PC-3 (cell line): ENCODE measurements at regions of chr7 and their contacts with region 1.

Region 1: GRCh38 chr7:105759670-105760550 is 116.5 kb downstream of the ATXN7L1 start:
- DNase-seq: peak; percentile 85
- ATAC-seq: peak; percentile 80
- H3K4me3 ChIP-seq: no peak overlapping the region
- H3K27ac ChIP-seq: no peak overlapping the region
- H3K4me1 ChIP-seq: no peaks in the 10 kb centered on the region; the same call in 1 of the 2 replicates
- H3K27me3 ChIP-seq: no peaks in the 10 kb centered on the region
- CTCF ChIP-seq: peak; percentile 97

Region 2: DNA sequence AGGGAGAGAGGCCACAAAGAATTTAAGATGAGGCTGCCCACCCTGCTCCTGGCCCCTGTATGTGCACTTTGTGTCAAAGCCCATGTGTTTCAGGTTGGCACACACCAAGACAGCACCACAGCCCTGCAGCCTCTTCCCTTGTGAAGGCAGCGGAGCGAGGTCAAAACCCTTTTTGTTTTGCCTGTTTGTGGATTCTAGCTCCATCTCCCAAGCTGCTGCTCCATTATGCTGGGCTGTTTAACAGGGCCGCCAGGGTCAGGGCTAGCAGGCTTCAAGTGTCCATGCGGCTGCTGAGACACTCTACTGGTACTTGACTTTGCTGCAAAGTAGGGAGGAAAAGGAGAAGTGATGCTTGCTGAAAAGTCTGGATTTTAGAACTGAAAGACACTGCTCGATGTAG is 36.3 kb before region 1 on chr7:
- CTCF ChIA-PET with region 1: no interaction called
- POLR2A ChIA-PET with region 1: no interaction called
- intact Hi-C with region 1: no loop called
- DNase-seq: no peak
- ATAC-seq: no peak
- H3K4me3 ChIP-seq: no peak overlapping the region
- H3K27ac ChIP-seq: no peak overlapping the region
- H3K4me1 ChIP-seq: peaks cover 10% of the 10 kb centered on the region
- H3K27me3 ChIP-seq: no peaks in the 10 kb centered on the region
- CTCF ChIP-seq: no peak

Region 3: DNA sequence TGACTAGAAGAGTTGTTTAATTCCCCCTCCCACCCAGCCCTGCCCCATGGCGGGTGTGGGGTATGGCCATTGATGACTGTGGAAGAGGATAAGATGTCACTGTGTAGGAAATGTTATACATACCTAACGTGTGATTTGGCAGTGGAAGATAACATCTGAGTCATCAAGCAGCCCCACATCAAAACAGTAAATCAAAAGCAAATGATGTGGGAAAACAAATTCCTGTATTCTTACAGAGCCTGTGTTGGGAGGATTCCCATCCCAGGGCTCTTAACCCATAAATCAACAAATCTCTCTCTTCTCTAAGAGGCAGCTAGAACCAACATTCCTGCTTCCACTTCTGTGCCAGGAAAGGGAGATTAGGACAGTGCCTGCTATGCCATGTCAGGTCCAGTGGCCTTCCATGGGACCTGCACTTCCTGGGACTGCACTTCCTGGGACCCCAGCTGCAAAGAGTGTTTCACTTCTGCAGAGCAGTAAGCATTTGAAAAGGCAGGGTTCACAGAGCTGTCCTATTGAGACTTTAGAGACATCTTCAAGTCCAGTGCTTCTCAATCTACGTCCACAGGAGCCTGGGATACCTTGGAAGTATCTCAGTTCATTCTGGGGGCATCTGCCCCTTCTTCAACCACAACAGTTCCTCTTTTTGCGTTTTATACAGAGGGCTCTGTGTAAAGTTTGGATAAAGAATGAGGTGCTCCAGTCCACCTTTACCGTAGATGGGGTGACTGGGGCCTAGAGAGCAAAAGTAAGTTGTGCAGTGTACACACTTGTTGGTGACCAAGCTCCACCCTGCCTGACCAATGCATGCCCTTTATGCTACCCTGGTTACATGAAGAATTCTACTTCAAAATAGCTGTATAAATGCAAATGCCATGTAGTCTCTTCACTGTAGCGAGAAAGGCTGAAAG is 70.7 kb after region 1 on chr7:
- CTCF ChIA-PET with region 1: interaction called, 4 read pairs
- POLR2A ChIA-PET with region 1: no interaction called
- intact Hi-C with region 1: loop called (anchors 1 kb)
- DNase-seq: peak; percentile 99
- ATAC-seq: peak; percentile 82
- H3K4me3 ChIP-seq: no peak overlapping the region
- H3K27ac ChIP-seq: peak overlapping the region; percentile 82
- H3K4me1 ChIP-seq: peaks cover 57% of the 10 kb centered on the region
- H3K27me3 ChIP-seq: no peaks in the 10 kb centered on the region
- CTCF ChIP-seq: no peak

Region 4: DNA sequence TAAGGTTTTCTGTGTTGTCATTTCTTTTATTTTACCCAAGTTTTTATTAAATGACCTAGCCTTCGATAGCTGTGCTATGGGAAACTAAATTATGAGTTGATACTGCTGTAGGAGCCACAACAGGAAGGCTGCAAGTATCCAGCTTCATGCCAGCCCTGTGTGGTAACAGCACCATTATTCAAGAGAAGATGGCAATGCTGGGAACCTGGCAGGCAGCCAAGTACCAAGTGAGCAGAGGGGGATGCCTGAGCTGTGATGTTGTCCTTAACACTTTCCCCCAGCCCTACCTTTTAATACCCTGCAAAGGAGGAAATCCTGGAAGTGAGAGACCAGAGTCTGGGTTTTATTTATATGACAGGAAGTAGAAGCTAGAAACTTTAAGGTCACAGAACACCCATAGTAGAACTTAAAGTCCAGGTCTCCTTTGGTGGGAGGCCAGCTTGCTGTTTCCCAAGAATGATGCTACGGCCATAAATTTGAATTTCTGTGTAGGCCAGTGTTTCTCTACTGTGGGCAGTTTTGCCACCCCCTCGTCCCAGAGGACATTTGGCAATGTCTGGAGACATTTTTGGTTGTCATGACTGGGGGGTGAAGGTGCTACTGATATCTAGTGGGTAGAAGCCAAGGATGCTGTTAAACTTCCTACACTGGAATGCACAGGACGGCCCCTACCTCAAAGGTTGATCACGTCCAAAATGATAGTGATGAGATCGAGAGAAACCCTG is 125.6 kb after region 1 on chr7:
- CTCF ChIA-PET with region 1: interaction called, 13 read pairs
- POLR2A ChIA-PET with region 1: no interaction called
- intact Hi-C with region 1: no loop called
- DNase-seq: no peak
- ATAC-seq: no peak
- H3K4me3 ChIP-seq: no peak overlapping the region
- H3K27ac ChIP-seq: no peak overlapping the region
- H3K4me1 ChIP-seq: no peaks in the 10 kb centered on the region
- H3K27me3 ChIP-seq: no peaks in the 10 kb centered on the region
- CTCF ChIP-seq: no peak

Region 5: DNA sequence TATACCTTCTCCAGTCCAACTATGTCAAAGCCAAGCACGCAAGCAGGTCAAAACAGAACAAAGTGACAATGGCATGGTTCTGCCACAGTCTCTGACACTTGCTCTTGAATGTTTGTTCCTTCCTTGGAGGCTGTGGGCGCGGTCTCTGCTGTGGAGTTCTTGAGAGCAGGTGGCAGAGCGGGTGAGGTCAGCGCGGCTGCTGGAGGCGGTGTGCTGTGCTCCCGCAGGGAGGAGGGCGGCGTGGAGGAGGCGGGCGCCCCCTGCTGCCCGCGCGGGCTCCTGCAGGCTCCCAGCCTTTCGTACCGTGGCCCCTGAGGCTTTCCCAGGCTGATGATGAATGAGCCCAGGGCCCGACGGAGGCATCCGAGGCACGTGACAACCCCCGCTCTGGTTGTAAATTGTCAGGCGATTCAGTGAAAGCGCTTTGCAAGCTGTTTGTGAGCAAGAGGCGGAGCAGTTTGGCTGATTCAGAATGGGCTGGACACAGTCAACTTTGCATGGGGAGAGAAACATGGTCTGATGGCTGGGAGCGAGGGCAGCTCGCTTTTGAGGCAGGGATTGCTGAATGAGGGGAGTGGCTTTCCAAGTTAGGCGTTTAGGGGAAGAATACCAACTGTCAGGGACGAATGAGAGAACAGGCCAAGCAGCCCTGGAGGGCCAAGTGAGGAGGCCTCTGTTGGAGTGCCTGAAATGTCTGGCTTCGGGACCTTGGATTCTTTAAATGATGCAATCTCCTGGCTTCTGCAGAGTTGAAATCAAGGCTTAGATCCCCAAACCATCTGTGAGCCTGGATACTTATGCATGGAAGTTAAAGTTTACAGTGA is 249.7 kb after region 1 on chr7:
- CTCF ChIA-PET with region 1: interaction called, 3 read pairs
- POLR2A ChIA-PET with region 1: no interaction called
- intact Hi-C with region 1: loop called (anchors 1 kb)
- DNase-seq: peak; percentile 91
- ATAC-seq: peak; percentile 99
- H3K4me3 ChIP-seq: no peak overlapping the region
- H3K27ac ChIP-seq: no peak overlapping the region
- H3K4me1 ChIP-seq: no peaks in the 10 kb centered on the region
- H3K27me3 ChIP-seq: no peaks in the 10 kb centered on the region
- CTCF ChIP-seq: peak; percentile 99

Region 6: GRCh38 chr7:106041140-106041717 is 281.3 kb after region 1 on chr7:
- CTCF ChIA-PET with region 1: interaction called, 14 read pairs
- POLR2A ChIA-PET with region 1: no interaction called
- intact Hi-C with region 1: loop called (anchors 1 kb)
- DNase-seq: peak; percentile 79
- ATAC-seq: peak; percentile 66
- H3K4me3 ChIP-seq: no peak overlapping the region
- H3K27ac ChIP-seq: no peak overlapping the region
- H3K4me1 ChIP-seq: peaks cover 5% of the 10 kb centered on the region
- H3K27me3 ChIP-seq: no peaks in the 10 kb centered on the region
- CTCF ChIP-seq: peak; percentile 97

Region 7: GRCh38 chr7:106094800-106095199 is 334.9 kb after region 1 on chr7:
- CTCF ChIA-PET with region 1: no interaction called
- POLR2A ChIA-PET with region 1: no interaction called
- intact Hi-C with region 1: no loop called
- DNase-seq: no peak
- ATAC-seq: peak; percentile 83
- H3K4me3 ChIP-seq: no peak overlapping the region
- H3K27ac ChIP-seq: no peak overlapping the region
- H3K4me1 ChIP-seq: 0 out of 2 replicates have a peak, but pooled peaks cover 4% of the 10 kb centered on the region
- H3K27me3 ChIP-seq: no peaks in the 10 kb centered on the region
- CTCF ChIP-seq: peak; percentile 46; the same call in 1 of the 2 replicates

Region 8: GRCh38 chr7:106153891-106154449 is 394.1 kb after region 1 on chr7:
- CTCF ChIA-PET with region 1: no interaction called
- POLR2A ChIA-PET with region 1: no interaction called
- intact Hi-C with region 1: loop called (anchors 5 kb)
- DNase-seq: peak; percentile 93
- ATAC-seq: peak; percentile 99
- H3K4me3 ChIP-seq: peak overlapping the region; percentile 39; the same call in 1 of the 2 replicates
- H3K27ac ChIP-seq: no peak overlapping the region
- H3K4me1 ChIP-seq: peaks cover 8% of the 10 kb centered on the region
- H3K27me3 ChIP-seq: no peaks in the 10 kb centered on the region
- CTCF ChIP-seq: peak; percentile 99